Thyroid gland (tissue), 4 donors: ENCODE measurements at regions of chr1 and their contacts with region 1.

Region 1: DNA sequence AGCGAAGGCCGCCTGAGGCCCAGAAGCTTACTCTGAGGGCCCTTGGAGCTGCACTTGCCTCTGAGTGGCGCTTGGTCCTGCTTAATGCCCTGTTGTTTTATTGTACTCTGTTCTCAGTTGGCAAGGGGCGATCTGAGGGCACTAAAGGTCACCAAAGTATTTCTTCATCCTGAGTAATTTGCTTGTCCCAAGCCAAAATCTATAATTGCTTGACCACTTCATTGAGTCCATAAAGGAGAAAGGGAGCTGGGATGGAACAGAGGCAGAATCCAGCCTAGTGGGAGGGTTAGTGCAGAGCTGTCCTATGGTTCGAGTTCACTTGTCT is 376 bp upstream of the NUAK2 start:
- DNase-seq: no peak
- H3K4me3 ChIP-seq: peak overlapping the region in 1 of 3 donors; percentile 87
- H3K27ac ChIP-seq: peak overlapping the region; percentile 94 to 97 (median 97)
- H3K4me1 ChIP-seq: peaks cover 27 to 40% of the 10 kb centered on the region in 2 donors
- H3K27me3 ChIP-seq: no peaks in the 10 kb centered on the region
- CTCF ChIP-seq: no peak
- POLR2A ChIP-seq: no peak

Region 2: GRCh38 chr1:205273551-205273982 is 48.4 kb before region 1 on chr1:
- intact Hi-C with region 1: loop called (anchors 2 kb)
- DNase-seq: peak; percentile 91 to 93
- H3K4me3 ChIP-seq: no peak overlapping the region
- H3K27ac ChIP-seq: peak overlapping the region; percentile 81 to 92 (median 90)
- H3K4me1 ChIP-seq: peaks cover 35 to 48% of the 10 kb centered on the region in 2 donors
- H3K27me3 ChIP-seq: no peaks in the 10 kb centered on the region
- CTCF ChIP-seq: peak; percentile 90 to 99 (median 98)
- POLR2A ChIP-seq: no peak

Region 3: GRCh38 chr1:205430696-205431305 is 108.9 kb after region 1 on chr1:
- intact Hi-C with region 1: no loop called
- DNase-seq: peak; percentile 52 to 68
- H3K4me3 ChIP-seq: peak overlapping the region; percentile 14 to 60 (median 18)
- H3K27ac ChIP-seq: no peak overlapping the region
- H3K4me1 ChIP-seq: peaks cover 0 to 11% of the 10 kb centered on the region in 2 donors
- H3K27me3 ChIP-seq: no peaks in the 10 kb centered on the region
- CTCF ChIP-seq: peak; percentile 47 to 89 (median 80)
- POLR2A ChIP-seq: no peak